ENCODE measurements at regions of chr3 and their contacts with region 1.

Region 1: GRCh38 chr3:73502609-73503583 is 121.8 kb downstream of the PDZRN3 start:
- DNase-seq: peak; percentile 30
- ATAC-seq: peak; percentile 58
- H3K4me3 Mint-ChIP-seq: no peak overlapping the region
- H3K27ac Mint-ChIP-seq: no peak overlapping the region
- H3K4me1 Mint-ChIP-seq: no peaks in the 10 kb centered on the region
- H3K27me3 Mint-ChIP-seq: peaks cover 15% of the 10 kb centered on the region
- CTCF ChIP-seq: peak; percentile 78

Region 2: DNA sequence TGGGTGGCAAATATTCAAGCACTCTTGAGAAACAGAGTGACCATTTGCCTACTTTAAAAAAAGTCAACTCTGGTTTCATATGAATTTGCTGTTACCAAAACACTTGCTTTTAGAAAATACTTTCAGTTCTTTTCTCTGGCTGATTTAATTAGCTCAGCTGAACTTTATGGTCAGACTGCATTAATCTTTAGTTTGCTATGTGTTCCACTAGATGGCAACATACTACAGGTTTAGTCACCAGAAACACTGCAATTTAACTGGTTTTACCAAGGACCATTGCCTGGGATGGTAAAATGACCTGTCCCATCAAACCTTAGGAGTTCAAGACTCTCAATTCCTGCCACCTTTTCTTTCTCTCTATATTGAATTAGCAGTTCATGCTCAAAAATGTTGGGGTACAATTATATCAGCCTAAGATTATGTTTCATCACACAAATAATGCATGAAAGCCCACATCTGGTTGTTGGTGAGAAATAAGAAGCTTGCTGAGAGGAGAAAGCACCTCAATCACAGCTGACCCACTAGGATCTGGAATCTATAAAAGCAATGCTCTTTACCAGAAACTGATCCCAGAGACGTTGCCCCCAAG is 1791.9 kb before region 1 on chr3:
- CTCF ChIA-PET with region 1: interaction called, 6 read pairs
- POLR2A ChIA-PET with region 1: no interaction called
- intact Hi-C with region 1: loop called (anchors 5 kb)
- DNase-seq: no peak
- ATAC-seq: peak; percentile 52
- H3K4me3 Mint-ChIP-seq: no peak overlapping the region
- H3K27ac Mint-ChIP-seq: no peak overlapping the region
- H3K4me1 Mint-ChIP-seq: no peaks in the 10 kb centered on the region
- H3K27me3 Mint-ChIP-seq: no peaks in the 10 kb centered on the region
- CTCF ChIP-seq: no peak

Region 3: DNA sequence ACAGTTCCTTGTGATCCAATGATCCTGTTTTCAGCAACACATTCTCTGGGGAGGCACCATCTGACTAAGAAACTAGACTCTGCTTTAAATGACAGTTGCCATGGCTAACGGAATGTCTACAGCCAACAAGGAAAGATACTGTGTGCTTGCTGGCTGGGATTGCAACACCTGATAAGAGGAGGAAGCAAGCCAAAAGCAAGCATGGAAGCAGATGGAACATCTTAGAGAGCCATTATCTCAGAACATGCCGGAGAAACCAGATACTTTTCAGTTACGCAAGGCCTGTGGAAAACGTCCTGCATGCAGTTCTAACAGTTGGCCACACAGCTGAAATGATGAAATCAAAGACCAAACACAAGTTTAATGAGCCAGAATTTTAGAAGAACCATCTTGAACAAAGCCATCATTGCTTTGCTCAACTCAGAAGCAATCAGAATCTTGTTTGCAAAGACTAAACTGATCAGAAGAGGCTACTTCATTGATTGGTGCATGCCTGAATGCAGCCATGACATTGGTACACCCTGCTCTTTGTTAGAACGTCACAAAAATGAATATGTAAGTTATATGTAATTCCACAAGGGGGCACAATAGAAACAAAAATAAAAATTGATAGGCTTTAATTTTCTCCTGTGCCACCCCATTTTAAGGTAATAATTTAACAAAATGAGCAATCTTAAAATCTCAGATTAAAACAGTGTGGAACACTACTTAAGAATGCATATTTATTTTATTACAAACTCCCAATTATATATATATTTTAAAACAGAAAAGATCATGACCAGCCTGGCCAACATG is 564.2 kb before region 1 on chr3:
- CTCF ChIA-PET with region 1: no interaction called
- POLR2A ChIA-PET with region 1: no interaction called
- intact Hi-C with region 1: loop called (anchors 1 kb)
- DNase-seq: no peak
- ATAC-seq: peak; percentile 81
- H3K4me3 Mint-ChIP-seq: no peak overlapping the region
- H3K27ac Mint-ChIP-seq: no peak overlapping the region
- H3K4me1 Mint-ChIP-seq: no peaks in the 10 kb centered on the region
- H3K27me3 Mint-ChIP-seq: peaks cover 4% of the 10 kb centered on the region
- CTCF ChIP-seq: no peak

Region 4: DNA sequence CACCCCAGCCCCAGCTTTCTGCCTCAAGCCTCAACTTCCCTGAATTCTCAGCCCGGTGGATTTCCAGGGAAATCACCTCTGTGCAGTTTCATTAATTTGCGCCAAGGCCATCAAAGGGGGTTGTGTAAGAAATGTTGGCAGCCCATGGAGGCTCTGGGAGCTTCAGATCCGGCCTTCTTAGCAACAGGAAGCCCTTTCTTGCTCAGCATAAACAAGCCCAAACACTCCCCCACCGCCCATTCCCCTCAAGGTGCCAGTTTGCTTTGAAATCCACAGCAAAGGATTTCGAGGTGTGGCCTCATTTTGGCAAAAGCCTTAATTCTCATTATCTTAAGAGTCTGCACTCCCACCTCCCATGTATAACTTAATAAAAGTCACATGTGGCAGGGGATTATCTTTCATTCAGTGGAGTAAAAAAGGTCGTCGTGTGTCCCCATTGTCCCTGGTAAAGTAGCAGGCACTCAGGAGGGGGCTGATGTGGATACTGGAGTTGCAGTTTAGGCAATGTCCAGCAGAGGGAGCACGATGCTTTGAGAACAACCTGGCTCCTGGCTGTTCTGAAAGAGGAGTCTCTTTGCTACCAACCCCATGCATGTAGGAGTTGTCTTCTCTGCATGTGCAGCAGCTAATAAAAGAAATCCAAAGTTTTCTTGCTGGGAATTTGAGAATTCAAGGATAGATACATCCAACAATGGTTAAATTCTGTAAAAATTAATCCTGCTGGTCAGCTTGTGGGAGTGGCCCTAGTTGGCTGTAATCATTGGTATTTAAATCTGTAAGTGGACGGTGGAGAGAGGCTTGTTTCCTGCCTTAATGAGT is 401.9 kb before region 1 on chr3:
- CTCF ChIA-PET with region 1: interaction called, 20 read pairs
- POLR2A ChIA-PET with region 1: no interaction called
- intact Hi-C with region 1: loop called (anchors 1 kb)
- DNase-seq: peak; percentile 50
- ATAC-seq: peak; percentile 83
- H3K4me3 Mint-ChIP-seq: no peak overlapping the region
- H3K27ac Mint-ChIP-seq: no peak overlapping the region
- H3K4me1 Mint-ChIP-seq: no peaks in the 10 kb centered on the region
- H3K27me3 Mint-ChIP-seq: peaks cover 9% of the 10 kb centered on the region
- CTCF ChIP-seq: peak; percentile 69

Region 5: DNA sequence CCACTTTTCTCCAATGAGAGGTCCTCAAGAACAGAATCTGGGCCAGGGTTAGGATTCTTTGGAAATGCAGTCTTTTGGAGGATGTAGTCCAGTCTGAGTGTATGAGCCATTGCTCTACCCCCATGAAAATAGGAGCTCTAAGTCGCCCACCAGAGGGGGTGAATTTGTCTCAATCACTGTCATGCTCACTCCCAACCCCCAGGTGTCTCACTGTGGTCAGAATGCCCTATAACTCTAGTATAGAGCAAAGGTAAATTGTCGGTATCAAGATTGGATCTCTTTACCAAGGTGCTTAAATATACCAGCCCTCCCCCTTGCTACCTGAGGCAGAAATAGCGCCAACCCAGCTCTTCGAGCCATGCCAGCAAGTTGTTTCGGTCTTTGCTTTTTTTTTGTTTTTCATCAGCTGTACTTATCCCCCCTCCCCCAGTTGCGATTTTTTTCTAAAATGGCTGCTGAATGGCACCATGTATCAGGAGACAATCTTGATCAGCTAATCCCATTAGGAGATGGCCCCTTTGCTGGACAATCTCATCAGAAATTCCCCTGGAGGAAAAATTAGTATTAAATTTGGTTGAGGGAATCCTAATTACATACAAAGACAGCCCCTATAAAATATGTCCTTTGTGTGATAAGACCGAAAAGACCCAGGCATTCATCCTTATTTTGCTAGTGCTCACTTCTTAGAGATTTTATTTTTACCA is 310.7 kb before region 1 on chr3:
- CTCF ChIA-PET with region 1: no interaction called
- POLR2A ChIA-PET with region 1: no interaction called
- intact Hi-C with region 1: loop called (anchors 1 kb)
- DNase-seq: no peak
- ATAC-seq: no peak
- H3K4me3 Mint-ChIP-seq: no peak overlapping the region
- H3K27ac Mint-ChIP-seq: no peak overlapping the region
- H3K4me1 Mint-ChIP-seq: no peaks in the 10 kb centered on the region
- H3K27me3 Mint-ChIP-seq: no peaks in the 10 kb centered on the region
- CTCF ChIP-seq: no peak

Region 6: GRCh38 chr3:73451306-73451944 is 51.5 kb before region 1 on chr3:
- CTCF ChIA-PET with region 1: interaction called, 3 read pairs
- POLR2A ChIA-PET with region 1: no interaction called
- intact Hi-C with region 1: loop called (anchors 1 kb)
- DNase-seq: no peak
- ATAC-seq: peak; percentile 60
- H3K4me3 Mint-ChIP-seq: no peak overlapping the region
- H3K27ac Mint-ChIP-seq: peak overlapping the region; percentile 61
- H3K4me1 Mint-ChIP-seq: peaks cover 19% of the 10 kb centered on the region
- H3K27me3 Mint-ChIP-seq: no peaks in the 10 kb centered on the region
- CTCF ChIP-seq: no peak